ENCODE measurements at regions of chr20 and their contacts with region 1.

Region 1: GRCh38 chr20:45969347-45970242 is 2.4 kb downstream of the ZNF335 start:
- DNase-seq: peak; percentile 62
- H3K4me3 ChIP-seq: no peak overlapping the region
- H3K27ac ChIP-seq: peak overlapping the region in 1 of 2 donors; percentile 99
- H3K4me1 ChIP-seq: peaks cover 14% of the 10 kb centered on the region
- H3K27me3 ChIP-seq: no peaks in the 10 kb centered on the region
- CTCF ChIP-seq: peak; percentile 24 to 60 (median 49)
- POLR2A ChIP-seq: no peak

Region 2: GRCh38 chr20:45812157-45813020 is 157.2 kb before region 1 on chr20 and contains the start of gene UBE2C:
- intact Hi-C with region 1: loop called (anchors 10 kb)
- DNase-seq: peak; percentile 99
- H3K4me3 ChIP-seq: peak within 1 kb of the TSS; percentile 56 to 57
- H3K27ac ChIP-seq: no peak within 1 kb of the TSS
- H3K4me1 ChIP-seq: peaks cover 6% of the 10 kb centered on the region
- H3K27me3 ChIP-seq: no peaks in the 10 kb centered on the region
- CTCF ChIP-seq: no peak
- POLR2A ChIP-seq: no peak
- total RNA-seq, gene UBE2C: 21.4 to 22.0 TPM

Region 3: GRCh38 chr20:46132705-46133120 is 163.1 kb after region 1 on chr20:
- intact Hi-C with region 1: no loop called
- DNase-seq: peak; percentile 83
- H3K4me3 ChIP-seq: no peak overlapping the region
- H3K27ac ChIP-seq: no peak overlapping the region
- H3K4me1 ChIP-seq: peaks cover 9% of the 10 kb centered on the region
- H3K27me3 ChIP-seq: no peaks in the 10 kb centered on the region
- CTCF ChIP-seq: peak; percentile 62 to 88 (median 74)
- POLR2A ChIP-seq: no peak